ENCODE measurements at regions of chr3 and their contacts with region 1.

Region 1: GRCh38 chr3:11335056-11335608 is 62.9 kb downstream of the ATG7 start:
- DNase-seq: peak; percentile 58
- H3K4me3 ChIP-seq: no peak overlapping the region
- H3K27ac ChIP-seq: peak overlapping the region in 1 of 2 experiments; percentile 30; a peak in 1 of 4 replicates
- H3K4me1 ChIP-seq: peaks cover 0 to 5% of the 10 kb centered on the region in 2 experiments; a peak in 1 of 4 replicates
- H3K27me3 ChIP-seq: no peaks in the 10 kb centered on the region
- CTCF ChIP-seq: peak; percentile 83
- EP300 ChIP-seq: no peak
- RAD21 ChIP-seq: peak; percentile 87

Region 2: GRCh38 chr3:11236595-11237461 is 98.3 kb before region 1 on chr3:
- CTCF ChIA-PET with region 1: interaction called, 48 read pairs
- POLR2A ChIA-PET with region 1: no interaction called
- DNase-seq: peak; percentile 70
- H3K4me3 ChIP-seq: no peak overlapping the region; a peak in 1 of 4 replicates
- H3K27ac ChIP-seq: peak overlapping the region; percentile 64 to 98
- H3K4me1 ChIP-seq: peaks cover 0 to 10% of the 10 kb centered on the region in 2 experiments; a peak in 3 of 4 replicates
- H3K27me3 ChIP-seq: no peaks in the 10 kb centered on the region
- CTCF ChIP-seq: peak; percentile 80
- EP300 ChIP-seq: no peak
- RAD21 ChIP-seq: peak; percentile 66

Region 3: GRCh38 chr3:11244126-11244677 is 90.9 kb before region 1 on chr3:
- CTCF ChIA-PET with region 1: interaction called, 11 read pairs
- POLR2A ChIA-PET with region 1: no interaction called
- DNase-seq: no peak
- H3K4me3 ChIP-seq: no peak overlapping the region
- H3K27ac ChIP-seq: no peak overlapping the region
- H3K4me1 ChIP-seq: peaks cover 0 to 13% of the 10 kb centered on the region in 2 experiments; a peak in 2 of 4 replicates
- H3K27me3 ChIP-seq: no peaks in the 10 kb centered on the region
- CTCF ChIP-seq: no peak
- EP300 ChIP-seq: no peak
- RAD21 ChIP-seq: no peak

Region 4: DNA sequence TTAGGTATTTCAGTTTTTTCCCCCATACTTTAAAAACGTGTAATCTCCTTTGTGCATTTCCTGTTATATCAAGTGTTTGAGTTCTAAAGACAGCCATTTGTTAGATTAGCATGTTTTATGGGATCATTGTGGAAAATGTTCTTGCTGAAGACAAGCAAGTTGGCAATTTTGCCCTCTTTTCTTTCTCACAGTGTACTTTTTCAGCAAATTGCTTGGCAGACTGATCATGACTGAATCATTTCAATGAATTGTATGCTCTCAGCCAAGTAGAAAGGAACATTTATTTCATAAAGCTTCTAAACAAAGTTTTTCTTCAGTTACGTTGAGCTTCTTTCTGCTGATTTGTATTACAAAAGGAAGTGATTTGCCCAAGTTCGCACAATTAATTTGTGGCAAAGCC is 11.3 kb before region 1 on chr3:
- CTCF ChIA-PET with region 1: interaction called, 38 read pairs
- POLR2A ChIA-PET with region 1: no interaction called
- DNase-seq: no peak
- H3K4me3 ChIP-seq: no peak overlapping the region
- H3K27ac ChIP-seq: no peak overlapping the region
- H3K4me1 ChIP-seq: peaks cover 0 to 3% of the 10 kb centered on the region in 2 experiments; a peak in 1 of 4 replicates
- H3K27me3 ChIP-seq: no peaks in the 10 kb centered on the region
- CTCF ChIP-seq: no peak
- EP300 ChIP-seq: no peak
- RAD21 ChIP-seq: no peak

Region 5: DNA sequence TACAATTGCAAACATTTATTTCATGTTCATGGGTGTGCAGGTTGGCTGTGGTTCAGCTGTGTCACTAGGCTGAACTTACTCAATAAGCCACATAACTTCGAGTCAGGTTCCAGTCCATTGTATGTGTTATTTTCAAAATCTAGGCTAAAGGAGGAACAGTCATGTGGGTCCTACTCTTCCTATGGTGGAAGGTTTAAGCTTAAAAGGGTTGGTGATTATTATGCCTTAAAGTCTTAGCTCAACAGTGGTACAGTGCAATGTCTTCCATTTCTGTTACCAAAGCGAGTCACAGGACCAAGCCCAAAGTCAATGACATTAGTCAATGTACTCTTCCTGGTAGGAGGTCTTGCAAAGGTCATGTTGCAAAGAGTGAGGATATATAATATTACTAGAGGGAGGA is 15.2 kb after region 1 on chr3:
- CTCF ChIA-PET with region 1: interaction called, 16 read pairs
- POLR2A ChIA-PET with region 1: interaction called, 4 read pairs
- DNase-seq: no peak
- H3K4me3 ChIP-seq: no peak overlapping the region
- H3K27ac ChIP-seq: no peak overlapping the region
- H3K4me1 ChIP-seq: 0 out of 4 replicates have a peak, but pooled peaks cover 0 to 9% of the 10 kb centered on the region in 2 experiments
- H3K27me3 ChIP-seq: no peaks in the 10 kb centered on the region
- CTCF ChIP-seq: no peak
- EP300 ChIP-seq: no peak
- RAD21 ChIP-seq: no peak